WTC11 (cell line): ENCODE measurements at regions of chr11 and their contacts with region 1.

Region 1: DNA sequence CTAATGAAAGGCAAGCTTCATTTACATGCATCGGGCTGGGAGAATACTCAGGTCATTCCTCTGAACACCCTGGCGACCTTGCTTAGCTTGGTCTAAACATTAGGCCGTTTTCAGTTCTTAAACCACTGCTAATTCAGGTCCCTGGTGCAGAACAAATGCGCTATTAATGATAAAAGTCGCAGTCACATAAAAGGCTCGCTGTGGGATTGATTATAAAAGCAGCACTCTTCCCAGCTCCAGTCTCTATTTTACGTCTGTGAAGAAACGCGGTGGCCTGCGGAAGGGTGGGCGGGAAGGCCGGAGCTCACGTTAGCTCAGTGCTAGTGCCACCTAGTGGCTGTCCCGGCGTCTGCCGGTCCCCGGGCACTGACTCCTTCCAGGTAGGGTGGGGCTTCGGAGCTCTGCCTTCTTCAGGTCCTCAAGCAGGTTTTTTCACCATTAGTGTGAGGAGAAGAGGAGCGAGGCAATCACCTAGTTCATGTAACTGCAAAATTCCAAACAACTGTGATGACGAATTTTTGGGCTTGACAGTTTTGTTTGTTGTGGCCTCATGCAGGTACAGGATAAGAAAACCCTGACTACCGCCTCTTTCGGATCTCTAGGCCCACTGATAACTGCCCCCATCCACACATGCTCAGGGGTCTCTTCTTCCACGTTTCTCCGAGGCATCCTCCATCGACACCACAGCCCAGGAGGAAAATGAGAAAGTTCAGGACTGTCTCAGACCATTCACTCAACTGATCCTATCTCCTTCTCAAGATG is 66.5 kb upstream of the CLMP start:
- DNase-seq: peak; percentile 93
- ATAC-seq: peak; percentile 98
- H3K4me3 Mint-ChIP-seq: peak overlapping the region; percentile 44
- H3K27ac Mint-ChIP-seq: no peak overlapping the region
- H3K4me1 Mint-ChIP-seq: peaks cover 7% of the 10 kb centered on the region; the same call in 1 of the 2 replicates
- H3K27me3 Mint-ChIP-seq: peaks cover 33% of the 10 kb centered on the region
- CTCF ChIP-seq: peak; percentile 87

Region 2: GRCh38 chr11:123020968-123021367 is 240.6 kb before region 1 on chr11:
- CTCF ChIA-PET with region 1: interaction called, 20 read pairs
- POLR2A ChIA-PET with region 1: no interaction called
- DNase-seq: peak; percentile 36
- ATAC-seq: peak; percentile 95
- H3K4me3 Mint-ChIP-seq: no peak overlapping the region
- H3K27ac Mint-ChIP-seq: no peak overlapping the region
- H3K4me1 Mint-ChIP-seq: peaks cover 8% of the 10 kb centered on the region
- H3K27me3 Mint-ChIP-seq: peaks cover 9% of the 10 kb centered on the region
- CTCF ChIP-seq: no peak; the same call in 1 of the 2 replicates

Region 3: GRCh38 chr11:123093739-123094138 is 167.8 kb before region 1 on chr11:
- CTCF ChIA-PET with region 1: interaction called, 10 read pairs
- POLR2A ChIA-PET with region 1: no interaction called
- DNase-seq: no peak
- ATAC-seq: no peak
- H3K4me3 Mint-ChIP-seq: no peak overlapping the region
- H3K27ac Mint-ChIP-seq: no peak overlapping the region
- H3K4me1 Mint-ChIP-seq: no peaks in the 10 kb centered on the region
- H3K27me3 Mint-ChIP-seq: no peaks in the 10 kb centered on the region
- CTCF ChIP-seq: no peak

Region 4: DNA sequence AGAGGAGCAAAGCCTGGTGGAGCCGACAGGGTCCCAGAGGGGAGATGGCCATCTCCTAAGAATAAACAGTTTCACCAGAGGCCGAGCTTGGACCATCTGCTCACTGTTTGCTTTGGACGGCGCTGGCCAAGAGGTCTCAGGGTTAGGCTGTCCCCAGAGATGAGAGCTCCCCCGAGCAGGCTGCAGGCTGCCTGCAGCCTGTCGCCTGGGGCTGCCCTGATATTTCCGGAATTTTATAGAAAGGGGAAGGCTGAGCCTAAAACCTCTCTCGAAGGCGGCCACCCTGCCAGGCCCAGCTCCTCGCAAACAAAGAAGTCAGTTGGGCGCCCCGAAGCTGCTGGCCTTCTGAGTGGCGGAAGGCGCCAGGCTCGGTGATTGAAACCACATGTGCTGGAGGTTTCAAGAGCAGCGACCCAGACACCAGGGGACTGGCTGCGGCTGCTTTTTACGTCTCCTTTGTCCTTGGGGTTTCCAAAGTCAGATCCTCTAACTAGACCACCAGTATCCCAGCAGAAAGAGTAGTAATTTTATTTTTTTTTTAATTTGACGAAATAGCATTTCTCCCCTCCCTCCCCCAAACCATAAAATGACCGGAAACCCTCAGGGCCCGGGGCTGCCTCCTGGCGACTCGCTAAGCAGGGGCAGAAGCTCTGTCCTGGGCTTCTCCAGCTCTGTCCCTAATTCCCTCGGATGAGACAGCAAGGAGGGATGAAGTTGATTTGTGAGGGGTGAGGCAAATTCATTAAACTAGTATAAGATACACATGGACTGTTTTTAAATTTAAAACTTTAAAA is 123.9 kb before region 1 on chr11:
- CTCF ChIA-PET with region 1: interaction called, 17 read pairs
- POLR2A ChIA-PET with region 1: no interaction called
- DNase-seq: peak; percentile 78
- ATAC-seq: peak; percentile 93
- H3K4me3 Mint-ChIP-seq: peak overlapping the region; percentile 55
- H3K27ac Mint-ChIP-seq: peak overlapping the region; percentile 98
- H3K4me1 Mint-ChIP-seq: peaks cover 24% of the 10 kb centered on the region
- H3K27me3 Mint-ChIP-seq: no peaks in the 10 kb centered on the region
- CTCF ChIP-seq: no peak

Region 5: DNA sequence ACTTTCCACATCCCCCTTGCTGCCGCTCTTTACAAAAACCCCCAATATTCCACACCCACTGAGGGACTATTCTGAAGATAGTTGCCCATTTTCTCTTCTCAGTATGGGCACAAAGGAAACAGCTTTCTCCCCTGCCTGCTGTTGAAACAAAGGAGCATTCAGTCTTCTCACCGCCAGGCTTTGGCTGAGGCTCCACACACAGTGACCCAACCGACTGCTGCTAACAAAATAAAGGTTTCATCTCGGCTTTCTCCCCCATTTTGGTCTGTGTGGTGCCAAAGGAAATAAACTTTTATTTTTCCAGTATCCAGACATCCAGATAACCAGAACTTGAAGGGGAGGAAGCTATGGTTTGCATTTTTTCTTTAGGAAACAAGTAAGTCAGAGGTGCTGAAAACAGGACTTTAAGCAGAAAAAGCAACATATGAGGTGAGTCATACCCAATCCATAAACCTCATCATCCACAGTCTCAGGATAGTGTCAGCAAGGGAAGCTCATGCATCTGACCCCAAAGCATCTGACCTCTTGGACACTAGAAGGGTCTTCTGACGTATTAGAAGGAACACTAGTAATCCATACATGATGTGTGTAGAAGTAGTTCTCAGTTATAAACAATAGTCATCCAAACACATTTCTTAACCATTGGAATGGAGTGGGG is 72.9 kb before region 1 on chr11:
- CTCF ChIA-PET with region 1: interaction called, 14 read pairs
- POLR2A ChIA-PET with region 1: interaction called, 3 read pairs
- DNase-seq: no peak
- ATAC-seq: peak; percentile 63
- H3K4me3 Mint-ChIP-seq: 0 out of 2 replicates have a peak overlapping the region, but pooled peaks have one; percentile 31
- H3K27ac Mint-ChIP-seq: peak overlapping the region; percentile 38; the same call in 1 of the 2 replicates
- H3K4me1 Mint-ChIP-seq: peaks cover 67% of the 10 kb centered on the region
- H3K27me3 Mint-ChIP-seq: no peaks in the 10 kb centered on the region
- CTCF ChIP-seq: no peak

Region 6: DNA sequence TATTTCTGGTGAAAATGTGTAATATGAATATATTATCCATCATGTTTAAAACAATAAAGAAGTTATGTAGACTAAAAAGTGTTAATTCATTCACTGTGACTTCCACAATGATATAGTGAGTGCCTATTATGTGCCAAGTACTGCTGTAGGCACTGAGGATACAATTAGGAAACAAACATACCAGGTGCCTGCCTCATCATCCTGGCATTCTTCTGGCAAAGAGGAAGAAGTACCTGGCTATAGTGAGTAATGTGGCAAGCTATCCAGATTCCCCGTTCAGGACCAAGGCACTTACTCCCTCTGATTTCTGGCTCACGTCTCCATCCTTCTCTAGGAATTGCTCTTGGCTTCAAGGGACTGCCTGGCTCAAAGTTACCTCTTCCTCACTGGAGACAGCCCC is 11.0 kb after region 1 on chr11:
- CTCF ChIA-PET with region 1: interaction called, 26 read pairs
- POLR2A ChIA-PET with region 1: no interaction called
- DNase-seq: no peak
- ATAC-seq: no peak
- H3K4me3 Mint-ChIP-seq: no peak overlapping the region
- H3K27ac Mint-ChIP-seq: no peak overlapping the region
- H3K4me1 Mint-ChIP-seq: no peaks in the 10 kb centered on the region; the same call in 1 of the 2 replicates
- H3K27me3 Mint-ChIP-seq: no peaks in the 10 kb centered on the region; the same call in 1 of the 2 replicates
- CTCF ChIP-seq: no peak

Region 7: DNA sequence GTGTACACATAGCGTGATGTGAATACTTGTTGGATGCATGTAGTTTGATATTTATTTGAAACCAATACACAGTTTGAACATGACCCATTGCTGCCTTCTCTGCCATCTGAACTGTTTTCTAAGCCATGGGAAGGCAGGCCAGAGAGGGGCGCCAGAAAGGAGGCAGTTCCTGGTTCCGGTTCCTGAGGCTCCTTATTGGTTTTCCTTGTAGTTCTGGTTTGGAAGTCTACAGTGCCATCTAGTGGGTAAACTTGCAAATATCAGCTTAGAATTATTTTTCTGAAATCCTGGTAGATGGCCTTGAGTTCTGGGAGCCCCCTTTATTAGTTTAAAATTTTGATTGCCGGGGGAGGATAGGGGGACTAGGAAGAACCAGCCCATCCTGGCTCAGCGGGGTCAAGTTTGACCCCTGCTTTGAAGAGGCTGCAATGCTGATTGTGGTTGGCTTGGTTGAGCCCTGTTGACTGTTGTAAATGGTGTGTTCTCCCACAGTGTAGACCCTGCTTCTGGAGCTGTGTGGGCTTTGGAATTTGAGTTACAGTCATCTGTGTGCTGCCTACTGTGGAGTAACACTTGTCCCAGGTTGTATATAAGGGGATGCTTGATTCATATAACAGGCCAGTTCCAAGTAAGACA is 216.9 kb after region 1 on chr11:
- CTCF ChIA-PET with region 1: interaction called, 30 read pairs
- POLR2A ChIA-PET with region 1: no interaction called
- DNase-seq: peak; percentile 64
- ATAC-seq: peak; percentile 81
- H3K4me3 Mint-ChIP-seq: no peak overlapping the region
- H3K27ac Mint-ChIP-seq: no peak overlapping the region
- H3K4me1 Mint-ChIP-seq: peaks cover 40% of the 10 kb centered on the region
- H3K27me3 Mint-ChIP-seq: no peaks in the 10 kb centered on the region
- CTCF ChIP-seq: no peak; the same call in none of the 2 replicates